Ascending aorta (tissue), 2 donors: ENCODE measurements at regions of chr1 and their contacts with region 1.

Region 1: DNA sequence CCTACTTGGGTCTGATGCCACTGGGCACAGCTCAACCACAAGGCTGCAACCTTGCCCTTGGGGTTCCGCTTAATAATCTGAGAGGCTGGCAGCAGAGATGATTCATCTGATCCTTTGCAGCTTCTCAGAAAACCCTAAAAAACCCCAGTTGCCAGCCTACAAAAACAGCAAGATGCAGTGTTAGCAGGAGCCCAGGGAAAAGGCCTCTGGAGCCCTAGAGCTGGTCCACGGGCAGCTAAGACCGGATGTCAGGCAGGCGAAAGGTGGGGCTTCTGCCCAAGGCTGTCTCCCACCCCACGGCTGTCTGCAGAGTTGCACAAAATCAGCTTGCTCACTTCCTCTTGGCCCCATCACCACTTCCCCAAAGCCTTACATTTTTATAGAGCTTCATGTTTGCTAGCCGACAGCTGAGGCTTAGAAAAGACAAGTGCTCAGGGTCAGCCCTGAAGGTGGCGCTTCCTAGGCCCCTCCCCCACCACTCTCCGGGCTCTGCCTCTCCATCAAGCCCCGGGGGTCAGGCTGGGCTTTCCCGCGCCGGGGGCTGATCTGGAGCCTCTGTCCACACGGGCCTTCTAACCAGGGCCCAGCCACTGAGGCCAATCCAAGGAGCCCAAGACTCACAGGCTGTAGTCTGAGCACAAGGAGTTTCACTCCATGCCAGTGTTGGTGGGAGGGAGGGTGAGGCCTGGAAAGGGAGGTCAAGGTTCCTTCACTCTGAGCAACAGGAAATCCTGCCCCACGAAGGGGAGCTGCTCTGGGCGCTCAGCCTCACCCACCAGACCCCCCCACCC is 4.2 kb upstream of the ADORA3 start:
- DNase-seq: peak; percentile 59 to 89
- H3K4me3 ChIP-seq: peak overlapping the region; percentile 36 to 45
- H3K27ac ChIP-seq: peak overlapping the region; percentile 93 to 98
- H3K4me1 ChIP-seq: peaks cover 9 to 29% of the 10 kb centered on the region in 2 donors
- H3K27me3 ChIP-seq: no peaks in the 10 kb centered on the region
- CTCF ChIP-seq: peak in 1 of 3 experiments; percentile 9

Region 2: DNA sequence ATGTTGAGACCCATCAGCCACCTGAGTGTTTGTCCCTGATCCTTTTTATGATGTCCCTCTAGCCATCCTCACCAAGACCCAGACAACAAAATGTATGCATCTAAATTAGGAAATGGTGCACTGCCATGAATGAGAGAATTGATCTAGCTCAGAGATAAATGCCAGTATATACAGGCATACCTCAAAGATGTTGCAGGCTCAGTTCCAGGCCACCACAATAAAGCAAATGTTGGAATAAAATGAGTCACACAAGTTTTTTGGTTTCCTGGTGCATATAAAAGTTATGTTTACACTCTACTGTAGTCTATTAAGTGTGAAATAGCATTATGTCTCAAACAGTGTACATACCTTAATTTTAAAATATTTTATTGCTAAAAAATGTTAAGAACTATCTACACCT is 153.0 kb before region 1 on chr1:
- intact Hi-C with region 1: no loop called
- DNase-seq: no peak
- H3K4me3 ChIP-seq: no peak overlapping the region
- H3K27ac ChIP-seq: no peak overlapping the region
- H3K4me1 ChIP-seq: no peaks in the 10 kb centered on the region
- H3K27me3 ChIP-seq: no peaks in the 10 kb centered on the region
- CTCF ChIP-seq: no peak

Region 3: GRCh38 chr1:111538343-111539025 is 30.9 kb after region 1 on chr1:
- intact Hi-C with region 1: loop called (anchors 1 kb)
- DNase-seq: no peak
- H3K4me3 ChIP-seq: no peak overlapping the region
- H3K27ac ChIP-seq: no peak overlapping the region
- H3K4me1 ChIP-seq: peaks cover 0 to 21% of the 10 kb centered on the region in 2 donors
- H3K27me3 ChIP-seq: no peaks in the 10 kb centered on the region
- CTCF ChIP-seq: no peak

Region 4: GRCh38 chr1:111592389-111593361 is 85.1 kb after region 1 on chr1:
- intact Hi-C with region 1: loop called (anchors 2 kb)
- DNase-seq: peak; percentile 87 to 97
- H3K4me3 ChIP-seq: peak overlapping the region; percentile 27 to 39
- H3K27ac ChIP-seq: peak overlapping the region; percentile 74 to 75
- H3K4me1 ChIP-seq: peaks cover 5 to 21% of the 10 kb centered on the region in 2 donors
- H3K27me3 ChIP-seq: no peaks in the 10 kb centered on the region
- CTCF ChIP-seq: no peak

Region 5: DNA sequence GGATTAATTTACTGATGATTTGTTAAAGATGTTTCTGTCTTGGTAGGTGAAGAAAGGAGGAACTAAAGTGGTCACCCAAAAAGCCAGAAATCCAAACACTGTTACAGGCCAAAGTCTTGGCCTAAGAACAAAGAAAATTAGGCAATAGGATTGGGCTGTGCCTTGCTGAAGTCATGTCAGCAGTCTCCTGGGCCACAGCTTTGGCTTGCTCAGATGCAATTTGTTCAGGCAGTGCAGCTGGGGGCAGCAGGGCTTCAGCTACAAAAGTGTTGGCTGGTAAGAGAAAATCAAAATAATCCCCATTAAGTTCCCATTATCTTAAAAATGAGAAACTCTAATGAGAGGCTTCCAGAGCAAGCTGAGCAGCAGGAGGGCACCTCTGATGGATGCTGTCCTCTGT is 98.0 kb after region 1 on chr1:
- intact Hi-C with region 1: loop called (anchors 5 kb)
- DNase-seq: peak in 1 of 2 donors; percentile 72
- H3K4me3 ChIP-seq: no peak overlapping the region
- H3K27ac ChIP-seq: peak overlapping the region; percentile 59 to 63
- H3K4me1 ChIP-seq: peaks cover 5 to 16% of the 10 kb centered on the region in 2 donors
- H3K27me3 ChIP-seq: no peaks in the 10 kb centered on the region
- CTCF ChIP-seq: no peak

Region 6: DNA sequence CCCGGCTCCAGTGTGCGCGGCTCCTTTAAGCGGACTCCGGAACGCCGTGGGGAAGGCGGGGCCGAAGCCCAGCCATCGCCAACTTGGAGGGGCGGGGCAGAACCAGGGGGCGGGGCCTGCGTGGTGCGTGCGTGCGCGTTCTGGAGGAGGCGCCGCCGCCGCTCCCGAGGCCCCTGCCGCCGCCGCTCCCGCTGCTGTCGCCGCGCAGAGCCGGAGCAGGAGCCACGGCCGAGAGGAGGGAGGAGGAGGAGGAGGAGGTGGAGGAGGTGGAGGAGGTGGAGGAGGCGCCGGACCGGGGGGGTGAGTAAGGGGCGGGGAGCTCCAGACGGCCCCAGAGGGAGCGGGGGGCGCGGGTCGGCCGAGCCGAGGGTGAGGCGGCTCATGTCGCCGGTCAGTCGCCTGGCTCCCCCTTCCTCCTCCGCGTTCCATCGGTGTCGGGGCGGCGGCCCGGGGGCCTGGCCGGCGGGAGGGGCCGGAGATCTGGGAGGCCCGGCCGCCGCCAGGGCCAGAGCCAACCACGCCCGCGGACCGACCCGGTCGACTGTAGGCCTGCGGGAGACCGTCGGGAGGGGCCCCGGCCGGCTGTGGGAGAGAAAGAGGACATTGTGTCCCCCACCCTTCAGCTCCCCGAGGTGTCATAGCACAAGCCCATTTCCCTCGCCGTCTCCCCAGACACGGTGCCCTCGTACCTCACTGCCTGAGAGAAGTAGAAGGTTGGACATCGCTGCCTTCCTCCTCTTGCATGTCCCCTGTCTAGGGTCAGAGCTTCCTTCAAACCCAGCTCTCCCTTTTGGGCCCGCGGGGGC is 112.2 kb after region 1 on chr1 and contains the start of gene RAP1A:
- intact Hi-C with region 1: loop called (anchors 1 kb)
- DNase-seq: peak; percentile 69 to 97
- H3K4me3 ChIP-seq: peak within 1 kb of the TSS; percentile 92 to 96
- H3K27ac ChIP-seq: peak within 1 kb of the TSS; percentile 98 to 99
- H3K4me1 ChIP-seq: peaks cover 10 to 26% of the 10 kb centered on the region in 2 donors
- H3K27me3 ChIP-seq: no peaks in the 10 kb centered on the region
- CTCF ChIP-seq: no peak
- total RNA-seq, gene RAP1A: 44.1 TPM

Region 7: GRCh38 chr1:111656086-111657017 is 148.7 kb after region 1 on chr1:
- intact Hi-C with region 1: loop called (anchors 1 kb)
- DNase-seq: no peak
- H3K4me3 ChIP-seq: no peak overlapping the region
- H3K27ac ChIP-seq: no peak overlapping the region
- H3K4me1 ChIP-seq: peaks cover 0 to 36% of the 10 kb centered on the region in 2 donors
- H3K27me3 ChIP-seq: no peaks in the 10 kb centered on the region
- CTCF ChIP-seq: peak; percentile 47 to 61 (median 49)

Region 8: GRCh38 chr1:111709986-111710385 is 202.4 kb after region 1 on chr1:
- intact Hi-C with region 1: loop called (anchors 5 kb)
- DNase-seq: no peak
- H3K4me3 ChIP-seq: no peak overlapping the region
- H3K27ac ChIP-seq: no peak overlapping the region
- H3K4me1 ChIP-seq: no peaks in the 10 kb centered on the region
- H3K27me3 ChIP-seq: no peaks in the 10 kb centered on the region
- CTCF ChIP-seq: no peak